Gastrocnemius medialis (tissue), 4 donors: ENCODE measurements at regions of chr1 and their contacts with region 1.

Region 1: GRCh38 chr1:208652296-208653160 is 408.3 kb upstream of the PLXNA2 start:
- DNase-seq: no peak
- ATAC-seq: no peak
- H3K4me3 ChIP-seq: no peak overlapping the region
- H3K27ac ChIP-seq: no peak overlapping the region
- H3K4me1 ChIP-seq: no peaks in the 10 kb centered on the region
- H3K27me3 ChIP-seq: no peaks in the 10 kb centered on the region
- CTCF ChIP-seq: peak; percentile 29 to 78 (median 58)
- POLR2A ChIP-seq: no peak

Region 2: DNA sequence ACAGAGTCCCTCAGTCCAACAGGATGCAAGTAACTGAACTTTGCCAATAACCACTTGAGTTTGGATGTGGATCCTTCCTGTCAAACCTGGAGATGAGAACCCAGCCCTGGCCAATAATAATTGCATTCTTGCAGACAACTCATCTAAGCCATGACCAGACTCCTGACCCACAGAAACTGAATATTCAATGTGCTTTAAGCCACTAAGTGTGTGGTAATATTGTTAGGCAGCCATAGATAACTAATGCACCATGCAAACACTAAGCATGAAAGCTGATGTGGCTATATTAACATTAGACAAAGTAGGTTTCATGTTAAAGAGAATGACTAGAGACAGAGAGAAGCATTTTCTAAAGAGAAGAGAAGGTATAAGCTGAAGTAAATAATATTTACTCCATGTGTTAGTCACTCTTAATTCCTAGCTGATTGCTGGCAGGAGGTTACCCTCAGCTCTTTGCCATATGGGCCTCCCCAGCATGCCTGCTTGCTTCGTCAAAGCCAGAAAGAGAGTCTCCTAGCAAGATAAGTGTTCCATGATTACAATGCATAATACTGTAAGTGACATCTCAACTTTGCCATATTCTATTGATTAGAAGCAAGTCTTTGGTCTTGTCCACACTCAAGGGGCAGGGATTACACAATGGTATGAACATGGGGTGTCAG is 132.0 kb before region 1 on chr1:
- in situ Hi-C with region 1: no loop called
- intact Hi-C with region 1: no loop called
- DNase-seq: no peak
- ATAC-seq: no peak
- H3K4me3 ChIP-seq: no peak overlapping the region
- H3K27ac ChIP-seq: no peak overlapping the region
- H3K4me1 ChIP-seq: no peaks in the 10 kb centered on the region
- H3K27me3 ChIP-seq: no peaks in the 10 kb centered on the region
- CTCF ChIP-seq: no peak
- POLR2A ChIP-seq: no peak

Region 3: GRCh38 chr1:208766832-208767231 is 114.3 kb after region 1 on chr1:
- in situ Hi-C with region 1: no loop called
- intact Hi-C with region 1: no loop called
- DNase-seq: no peak
- ATAC-seq: no peak
- H3K4me3 ChIP-seq: no peak overlapping the region
- H3K27ac ChIP-seq: no peak overlapping the region
- H3K4me1 ChIP-seq: no peaks in the 10 kb centered on the region
- H3K27me3 ChIP-seq: no peaks in the 10 kb centered on the region
- CTCF ChIP-seq: no peak
- POLR2A ChIP-seq: no peak

Region 4: DNA sequence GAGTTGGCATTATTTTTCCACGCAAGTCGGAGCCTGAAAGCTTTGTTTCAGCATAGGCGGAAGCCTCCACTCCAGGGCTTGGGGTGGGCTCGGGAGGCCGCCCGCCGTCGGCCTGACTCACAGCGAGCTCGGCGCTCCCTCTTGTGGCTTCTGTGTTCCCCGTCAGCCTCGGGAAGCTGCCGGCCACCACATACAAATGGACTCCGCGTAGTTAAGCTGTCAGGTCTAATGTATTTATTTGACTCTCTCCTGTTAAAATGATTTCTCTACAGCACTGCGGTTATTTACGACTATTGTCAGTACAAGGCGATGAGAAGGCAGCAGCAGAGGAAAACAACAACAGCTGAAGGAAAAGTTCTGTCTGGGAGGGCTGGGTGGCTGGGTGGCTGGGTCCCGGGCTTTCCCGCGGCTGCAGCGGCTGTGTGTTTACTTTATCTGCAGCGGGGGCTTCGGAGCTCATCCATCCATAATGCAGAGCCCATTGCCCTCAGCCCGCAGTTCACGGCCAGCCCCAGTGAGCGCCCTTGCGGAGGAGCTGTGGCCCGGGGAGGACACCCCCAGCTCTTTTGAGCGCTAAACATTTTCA is 555.3 kb after region 1 on chr1:
- in situ Hi-C with region 1: no loop called
- intact Hi-C with region 1: loop called (anchors 10 kb)
- DNase-seq: no peak
- ATAC-seq: peak; percentile 58 to 62
- H3K4me3 ChIP-seq: peak overlapping the region; percentile 13 to 31 (median 22)
- H3K27ac ChIP-seq: no peak overlapping the region
- H3K4me1 ChIP-seq: peaks cover 0 to 3% of the 10 kb centered on the region in 2 donors
- H3K27me3 ChIP-seq: peaks cover 14 to 20% (median 18%) of the 10 kb centered on the region in 3 donors
- CTCF ChIP-seq: peak in 4 of 5 experiments; percentile 14 to 62 (median 34)
- POLR2A ChIP-seq: no peak